ENCODE measurements at regions of chr20 and their contacts with region 1.

Region 1: DNA sequence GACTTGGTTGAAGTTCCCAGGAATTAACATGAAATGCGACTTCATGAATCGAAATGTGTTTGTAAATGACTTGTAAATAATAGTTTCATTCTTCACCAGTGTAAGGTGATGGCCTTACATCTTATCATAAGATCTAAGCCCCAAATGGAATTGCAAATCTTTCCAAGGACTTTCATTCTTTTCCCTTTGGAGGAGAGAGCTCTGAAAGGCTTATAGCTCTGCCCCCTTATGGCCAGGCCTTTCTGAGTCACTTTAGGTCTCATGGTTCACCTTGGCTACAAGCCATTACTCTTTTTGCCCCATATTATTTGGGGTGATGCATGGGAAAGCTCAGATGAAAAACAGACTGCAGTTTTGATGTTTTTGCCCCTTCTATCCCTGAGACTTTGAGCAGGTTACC is 209.1 kb upstream of the BMP2 start:
- DNase-seq: peak in 1 of 2 experiments; percentile 25
- H3K4me3 ChIP-seq: no peak overlapping the region
- H3K4me3 Mint-ChIP-seq: no peak overlapping the region
- H3K27ac Mint-ChIP-seq: no peak overlapping the region
- H3K4me1 ChIP-seq: peaks cover 12% of the 10 kb centered on the region; the same call in 1 of the 2 replicates
- H3K4me1 Mint-ChIP-seq: no peaks in the 10 kb centered on the region
- H3K27me3 ChIP-seq: no peaks in the 10 kb centered on the region
- H3K27me3 Mint-ChIP-seq: no peaks in the 10 kb centered on the region
- CTCF ChIP-seq: peak; percentile 20 to 54

Region 2: GRCh38 chr20:6480328-6481200 is 77.8 kb before region 1 on chr20:
- CTCF ChIA-PET with region 1: interaction called, 7 read pairs
- POLR2A ChIA-PET with region 1: interaction called, 3 read pairs
- intact Hi-C with region 1: loop called (anchors 1 kb)
- DNase-seq: peak in 1 of 2 experiments; percentile 61
- H3K4me3 ChIP-seq: no peak overlapping the region
- H3K4me3 Mint-ChIP-seq: no peak overlapping the region
- H3K27ac Mint-ChIP-seq: no peak overlapping the region
- H3K4me1 ChIP-seq: peaks cover 17% of the 10 kb centered on the region
- H3K4me1 Mint-ChIP-seq: peaks cover 13% of the 10 kb centered on the region
- H3K27me3 ChIP-seq: no peaks in the 10 kb centered on the region
- H3K27me3 Mint-ChIP-seq: no peaks in the 10 kb centered on the region
- CTCF ChIP-seq: no peak

Measured in Caco-2 (cell line).